GM12878 (cell line): ENCODE measurements at regions of chr17 and their contacts with region 1.

Region 1: GRCh38 chr17:43309505-43310332 is 75.9 kb upstream of the RNU2-1 start:
- DNase-seq: no peak
- ATAC-seq: no peak
- H3K4me3 ChIP-seq: no peak overlapping the region
- H3K27ac ChIP-seq: no peak overlapping the region
- H3K4me1 ChIP-seq: no peaks in the 10 kb centered on the region
- H3K27me3 ChIP-seq: no peaks in the 10 kb centered on the region
- CTCF ChIP-seq: no peak
- EP300 ChIP-seq: no peak
- POLR2A ChIP-seq: no peak
- RAD21 ChIP-seq: no peak

Region 2: DNA sequence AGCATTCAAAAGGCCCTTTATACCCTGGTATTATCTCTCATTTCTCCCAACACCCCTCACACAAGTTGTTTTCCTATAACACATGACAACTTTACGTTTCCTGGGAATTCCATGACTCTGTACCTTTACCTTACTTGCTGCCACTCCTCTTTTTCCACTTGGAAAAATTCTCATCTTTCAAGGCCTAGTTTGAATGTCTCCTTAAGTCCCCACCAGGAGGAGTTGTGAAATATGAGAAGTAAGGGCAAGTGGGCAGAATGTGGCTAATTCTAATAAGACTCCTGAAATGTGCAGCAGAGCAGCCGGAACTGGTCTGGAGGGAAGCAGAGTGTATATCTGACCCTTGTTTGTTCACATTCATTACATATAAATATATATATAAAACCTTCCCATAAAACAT is 224.2 kb before region 1 on chr17:
- CTCF ChIA-PET with region 1: no interaction called
- POLR2A ChIA-PET with region 1: no interaction called
- RAD21 ChIA-PET with region 1: no interaction called
- SMC1A ChIA-PET with region 1: no interaction called
- in situ Hi-C with region 1: no loop called
- intact Hi-C with region 1: no loop called
- DNase-seq: no peak
- ATAC-seq: no peak
- H3K4me3 ChIP-seq: no peak overlapping the region
- H3K27ac ChIP-seq: no peak overlapping the region
- H3K4me1 ChIP-seq: no peaks in the 10 kb centered on the region
- H3K27me3 ChIP-seq: no peaks in the 10 kb centered on the region
- CTCF ChIP-seq: no peak
- EP300 ChIP-seq: no peak
- POLR2A ChIP-seq: no peak
- RAD21 ChIP-seq: no peak

Region 3: GRCh38 chr17:43330876-43331639 is 21.3 kb after region 1 on chr17:
- CTCF ChIA-PET with region 1: interaction called, 16 read pairs
- POLR2A ChIA-PET with region 1: no interaction called
- RAD21 ChIA-PET with region 1: no interaction called
- SMC1A ChIA-PET with region 1: no interaction called
- in situ Hi-C with region 1: no loop called
- intact Hi-C with region 1: no loop called
- DNase-seq: no peak
- ATAC-seq: no peak
- H3K4me3 ChIP-seq: no peak overlapping the region
- H3K27ac ChIP-seq: no peak overlapping the region
- H3K4me1 ChIP-seq: peaks cover 15% of the 10 kb centered on the region
- H3K27me3 ChIP-seq: no peaks in the 10 kb centered on the region
- CTCF ChIP-seq: no peak
- EP300 ChIP-seq: no peak
- POLR2A ChIP-seq: no peak
- RAD21 ChIP-seq: no peak

Region 4: DNA sequence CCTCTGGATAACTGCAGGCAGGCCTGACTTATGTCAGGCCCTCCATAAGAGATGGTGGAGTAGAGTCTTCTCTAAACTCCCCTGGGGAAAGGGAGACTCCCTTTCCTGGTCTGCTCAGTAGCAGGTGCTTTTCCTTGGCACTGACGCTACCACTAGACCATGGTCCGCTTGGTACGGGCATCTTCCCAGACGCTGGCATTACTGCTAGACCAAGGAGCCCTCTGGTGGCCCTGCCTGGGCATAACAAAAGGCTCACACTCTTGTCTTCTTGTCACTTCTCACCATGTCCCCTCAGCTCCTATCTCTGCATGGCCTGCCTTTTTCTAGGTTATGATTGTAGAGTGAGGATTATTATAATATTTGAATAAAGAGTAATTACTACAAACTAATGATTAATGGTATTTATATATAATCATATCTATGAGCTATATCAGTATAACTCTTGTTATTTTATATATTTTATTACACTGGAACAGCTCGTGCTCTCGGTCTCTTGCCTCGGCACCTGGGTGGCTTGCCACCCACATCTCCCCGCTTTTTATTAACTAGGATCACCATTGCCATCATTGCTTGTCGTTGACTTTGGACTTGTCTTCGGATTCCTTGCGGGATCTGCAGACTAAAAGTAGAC is 29.3 kb after region 1 on chr17:
- CTCF ChIA-PET with region 1: interaction called, 16 read pairs
- POLR2A ChIA-PET with region 1: no interaction called
- RAD21 ChIA-PET with region 1: no interaction called
- SMC1A ChIA-PET with region 1: interaction called, 3 read pairs
- in situ Hi-C with region 1: no loop called
- intact Hi-C with region 1: no loop called
- DNase-seq: no peak
- ATAC-seq: no peak
- H3K4me3 ChIP-seq: no peak overlapping the region
- H3K27ac ChIP-seq: no peak overlapping the region
- H3K4me1 ChIP-seq: peaks cover 9% of the 10 kb centered on the region
- H3K27me3 ChIP-seq: no peaks in the 10 kb centered on the region
- CTCF ChIP-seq: peak; percentile 57 to 81 (median 62)
- EP300 ChIP-seq: no peak
- POLR2A ChIP-seq: no peak
- RAD21 ChIP-seq: peak; percentile 68